PC-9 (cell line): ENCODE measurements at regions of chr12 and their contacts with region 1.

Region 1: DNA sequence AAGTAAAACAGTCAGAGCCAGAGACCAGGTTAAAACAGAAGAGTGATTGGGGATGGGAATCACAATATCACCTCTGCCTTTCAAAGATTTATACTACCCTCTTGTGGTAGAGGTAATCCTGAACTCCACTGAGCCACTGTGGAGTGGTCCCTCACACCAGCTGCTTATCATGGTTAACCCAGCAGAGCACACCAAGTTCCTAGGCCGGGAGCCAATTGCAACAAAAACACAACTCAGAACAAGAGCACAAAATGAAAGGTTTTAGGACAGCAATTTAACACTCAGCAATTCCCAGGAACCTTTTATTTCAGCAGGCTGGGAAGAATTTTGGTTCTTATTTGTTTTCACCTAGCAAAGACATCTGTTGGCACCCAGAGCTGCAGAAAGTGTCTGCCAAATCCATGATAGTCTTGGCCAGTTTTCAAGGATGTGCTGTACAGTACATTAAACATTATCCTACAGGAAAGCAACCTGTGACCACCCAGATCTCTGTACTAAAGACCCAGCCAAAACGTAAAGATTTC is 220.5 kb upstream of the ATXN7L3B start:
- DNase-seq: peak in 1 of 2 experiments; percentile 15
- H3K4me3 ChIP-seq: no peak overlapping the region
- H3K27ac ChIP-seq: no peak overlapping the region
- H3K4me1 ChIP-seq: peaks cover 6% of the 10 kb centered on the region; the same call in 1 of the 2 replicates
- H3K27me3 ChIP-seq: no peaks in the 10 kb centered on the region
- CTCF ChIP-seq: peak; percentile 67

Region 2: GRCh38 chr12:72346363-72346944 is 1970.7 kb before region 1 on chr12:
- CTCF ChIA-PET with region 1: no interaction called
- POLR2A ChIA-PET with region 1: no interaction called
- intact Hi-C with region 1: loop called (anchors 2 kb)
- DNase-seq: peak in 1 of 2 experiments; percentile 51
- H3K4me3 ChIP-seq: no peak overlapping the region
- H3K27ac ChIP-seq: no peak overlapping the region
- H3K4me1 ChIP-seq: no peaks in the 10 kb centered on the region
- H3K27me3 ChIP-seq: no peaks in the 10 kb centered on the region
- CTCF ChIP-seq: peak; percentile 72

Region 3: GRCh38 chr12:73390261-73390660 is 926.9 kb before region 1 on chr12:
- CTCF ChIA-PET with region 1: no interaction called
- POLR2A ChIA-PET with region 1: interaction called, 15 read pairs
- intact Hi-C with region 1: no loop called
- DNase-seq: no peak
- H3K4me3 ChIP-seq: no peak overlapping the region
- H3K27ac ChIP-seq: no peak overlapping the region
- H3K4me1 ChIP-seq: no peaks in the 10 kb centered on the region
- H3K27me3 ChIP-seq: no peaks in the 10 kb centered on the region
- CTCF ChIP-seq: no peak

Region 4: GRCh38 chr12:74111688-74112360 is 205.3 kb before region 1 on chr12:
- CTCF ChIA-PET with region 1: no interaction called
- POLR2A ChIA-PET with region 1: no interaction called
- intact Hi-C with region 1: no loop called
- DNase-seq: peak in 1 of 2 experiments; percentile 14
- H3K4me3 ChIP-seq: no peak overlapping the region
- H3K27ac ChIP-seq: no peak overlapping the region
- H3K4me1 ChIP-seq: no peaks in the 10 kb centered on the region
- H3K27me3 ChIP-seq: no peaks in the 10 kb centered on the region
- CTCF ChIP-seq: peak; percentile 47; the same call in 1 of the 2 replicates